ENCODE measurements at regions of chr19 and their contacts with region 1.

Region 1: DNA sequence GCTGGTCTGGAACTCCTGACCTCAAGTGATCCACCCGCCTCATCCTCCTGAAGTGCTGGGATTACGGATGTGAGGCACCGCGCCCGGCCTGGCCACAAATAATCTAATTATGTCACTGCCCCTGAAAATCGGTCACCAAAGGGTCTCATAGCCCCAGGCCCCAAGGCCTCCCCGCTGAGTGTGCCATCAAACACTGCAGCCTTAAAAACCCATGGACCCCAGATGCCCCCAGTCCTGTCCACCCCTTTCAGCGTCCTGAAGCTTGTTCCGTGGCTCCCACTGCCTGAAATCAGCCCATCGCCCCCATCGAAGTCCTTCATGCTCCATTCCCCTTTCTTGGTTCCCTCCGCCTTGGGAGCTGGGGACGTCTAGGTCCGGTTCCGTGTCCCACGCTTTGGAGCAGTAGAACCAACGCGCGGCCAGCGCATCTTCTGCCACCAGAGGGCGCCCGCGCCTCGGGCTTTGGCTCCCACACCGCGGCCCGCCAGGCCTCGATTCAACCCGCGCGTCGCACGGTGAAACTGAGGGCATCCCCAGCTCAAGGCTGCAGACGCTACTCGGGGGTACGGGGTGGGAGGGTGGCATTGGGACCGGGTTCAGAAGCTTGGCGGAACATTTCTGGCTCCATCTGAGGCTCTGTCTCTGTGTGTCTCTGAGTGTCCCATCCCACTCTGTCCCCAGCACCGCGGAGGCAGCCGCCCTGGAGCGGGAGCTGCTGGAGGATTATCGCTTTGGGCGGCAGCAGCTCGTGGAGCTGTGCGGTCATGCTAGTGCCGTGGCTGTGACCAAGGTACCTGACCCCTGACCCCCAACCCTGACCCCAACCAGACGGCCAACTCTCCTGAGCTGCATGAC is 3.5 kb downstream of the YJEFN3 start:
- DNase-seq: peak; percentile 85
- H3K4me3 ChIP-seq: no peak overlapping the region
- H3K27ac ChIP-seq: no peak overlapping the region
- H3K4me1 ChIP-seq: peaks cover 27% of the 10 kb centered on the region
- H3K27me3 ChIP-seq: no peaks in the 10 kb centered on the region
- CTCF ChIP-seq: peak; percentile 97

Region 2: GRCh38 chr19:19937403-19937802 is 405.2 kb after region 1 on chr19:
- intact Hi-C with region 1: loop called (anchors 10 kb)
- DNase-seq: no peak
- H3K4me3 ChIP-seq: no peak overlapping the region
- H3K27ac ChIP-seq: no peak overlapping the region
- H3K4me1 ChIP-seq: no peaks in the 10 kb centered on the region
- H3K27me3 ChIP-seq: no peaks in the 10 kb centered on the region
- CTCF ChIP-seq: no peak